HCT116 (cell line): ENCODE measurements at regions of chr11 and their contacts with region 1.

Region 1: DNA sequence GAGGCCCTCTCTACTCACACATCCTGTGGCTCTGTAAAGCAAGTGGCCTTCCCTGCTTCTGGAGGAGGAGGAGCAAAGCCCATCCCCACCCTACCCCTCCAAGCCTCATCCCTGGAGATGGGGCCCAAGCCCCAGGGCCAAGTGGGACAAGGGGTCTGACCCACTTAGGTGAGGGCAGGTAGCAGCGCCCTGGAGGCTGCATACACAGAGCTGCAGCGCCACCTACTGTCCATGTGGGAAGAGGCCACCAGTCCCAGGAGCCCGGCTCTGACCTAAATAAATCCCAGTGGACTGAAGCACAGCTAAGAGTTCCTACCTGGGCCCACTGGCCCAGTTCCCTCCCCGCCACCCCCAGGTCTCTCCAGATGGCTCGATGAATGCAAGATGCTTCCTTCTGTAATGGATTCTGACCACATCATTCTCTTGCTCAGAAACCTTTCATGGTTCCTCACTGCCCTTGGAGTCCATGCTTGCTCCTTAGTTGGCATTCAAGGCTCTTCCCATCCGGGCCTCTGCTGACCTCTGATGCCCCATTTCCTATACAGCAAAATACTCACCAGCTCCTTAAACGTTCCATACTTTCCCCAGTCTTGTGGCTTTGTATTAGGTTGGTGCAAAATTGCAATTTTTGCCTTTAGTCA is 62.1 kb downstream of the THAP12 start:
- DNase-seq: peak; percentile 55
- ATAC-seq: peak; percentile 99
- H3K4me3 ChIP-seq: no peak overlapping the region
- H3K27ac ChIP-seq: no peak overlapping the region
- H3K4me1 ChIP-seq: peaks cover 0 to 10% of the 10 kb centered on the region in 2 experiments; a peak in 1 of 4 replicates
- H3K27me3 ChIP-seq: no peaks in the 10 kb centered on the region
- CTCF ChIP-seq: peak; percentile 88 to 92 (median 91)
- POLR2A ChIP-seq: no peak
- RAD21 ChIP-seq: peak; percentile 98

Region 2: DNA sequence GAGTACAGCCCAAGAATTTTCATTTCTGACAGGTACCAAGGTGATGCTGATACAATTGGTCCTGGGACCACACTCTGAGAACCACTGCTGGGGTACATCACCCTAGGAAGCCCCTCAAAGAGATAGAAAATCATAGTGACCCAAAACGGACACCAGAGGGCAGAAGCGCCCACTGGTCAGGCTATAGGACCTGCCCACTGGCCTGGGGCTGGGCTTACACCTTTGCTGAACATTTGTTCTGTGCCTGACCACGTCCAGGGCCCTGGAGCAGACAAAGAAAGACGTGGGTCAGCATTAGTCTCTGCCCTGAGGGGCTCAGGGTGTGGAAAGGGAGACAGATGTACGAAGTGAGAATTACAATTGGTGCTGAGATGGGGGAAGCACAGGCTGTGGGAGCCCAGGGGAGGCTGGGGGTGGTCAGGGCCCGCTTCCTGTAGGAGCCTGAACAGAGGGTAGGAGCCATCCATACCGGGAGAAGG is 771.2 kb before region 1 on chr11:
- CTCF ChIA-PET with region 1: no interaction called
- POLR2A ChIA-PET with region 1: no interaction called
- RAD21 ChIA-PET with region 1: no interaction called
- intact Hi-C with region 1: loop called (anchors 5 kb)
- DNase-seq: no peak
- ATAC-seq: peak; percentile 95
- H3K4me3 ChIP-seq: no peak overlapping the region
- H3K27ac ChIP-seq: no peak overlapping the region
- H3K4me1 ChIP-seq: peaks cover 0 to 8% of the 10 kb centered on the region in 2 experiments; a peak in 2 of 4 replicates
- H3K27me3 ChIP-seq: no peaks in the 10 kb centered on the region
- CTCF ChIP-seq: peak; percentile 80 to 93 (median 86); a peak in 5 of 6 replicates
- POLR2A ChIP-seq: no peak
- RAD21 ChIP-seq: peak; percentile 90

Region 3: DNA sequence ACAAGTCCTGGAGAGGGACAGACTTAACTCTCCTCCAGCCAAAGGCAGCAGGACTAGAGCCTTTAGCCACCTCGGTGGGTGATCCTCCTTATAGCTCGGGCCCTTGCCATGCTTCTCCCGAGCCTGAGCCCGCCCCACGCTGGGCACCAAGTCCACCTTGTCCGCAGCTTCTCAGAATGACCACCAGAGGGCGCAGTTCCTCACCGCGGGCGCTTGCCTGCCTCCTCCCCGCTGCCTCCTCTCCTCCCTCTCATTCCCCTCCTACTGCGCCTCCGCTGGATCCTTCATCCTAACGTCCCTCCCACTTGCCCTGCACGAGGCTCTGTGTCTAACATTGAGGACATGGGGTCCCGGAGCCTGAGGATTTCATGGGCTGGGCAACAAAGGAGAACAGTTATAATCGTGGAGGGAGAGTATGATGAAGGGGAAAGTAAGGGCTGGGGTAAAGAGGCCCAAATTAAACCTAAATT is 612.6 kb before region 1 on chr11:
- CTCF ChIA-PET with region 1: interaction called, 5 read pairs
- POLR2A ChIA-PET with region 1: no interaction called
- RAD21 ChIA-PET with region 1: no interaction called
- intact Hi-C with region 1: loop called (anchors 1 kb)
- DNase-seq: peak; percentile 77
- ATAC-seq: peak; percentile 100
- H3K4me3 ChIP-seq: no peak overlapping the region
- H3K27ac ChIP-seq: no peak overlapping the region
- H3K4me1 ChIP-seq: peaks cover 2 to 11% of the 10 kb centered on the region in 2 experiments; a peak in 2 of 4 replicates
- H3K27me3 ChIP-seq: no peaks in the 10 kb centered on the region
- CTCF ChIP-seq: peak; percentile 80 to 93 (median 93)
- POLR2A ChIP-seq: no peak
- RAD21 ChIP-seq: peak; percentile 67

Region 4: DNA sequence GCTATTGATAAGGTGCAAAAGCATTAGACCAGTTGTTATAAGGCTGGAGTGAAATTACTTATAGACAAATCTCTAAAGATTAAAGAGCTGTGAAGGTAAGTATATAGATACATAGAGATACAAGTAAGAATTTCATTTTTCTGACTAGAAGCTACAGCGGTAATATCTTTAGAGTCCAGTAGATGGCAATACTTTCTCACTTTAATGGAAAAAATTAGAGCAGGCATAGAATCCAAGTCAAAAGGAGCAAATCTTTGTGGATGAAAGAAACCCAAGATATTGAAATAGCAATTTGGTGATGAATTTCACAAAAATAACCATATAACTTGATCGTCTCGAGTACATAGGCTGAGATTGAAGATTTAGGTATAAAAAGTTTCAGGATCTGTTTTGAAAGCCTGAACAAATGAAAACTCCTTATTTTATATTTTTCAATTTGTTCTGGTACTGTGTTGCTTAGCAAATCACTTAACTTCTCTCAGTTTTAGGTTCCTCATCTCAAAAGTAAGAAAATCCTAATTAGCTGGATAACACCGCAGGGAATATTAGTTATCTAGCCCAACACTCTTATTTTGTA is 421.9 kb before region 1 on chr11:
- CTCF ChIA-PET with region 1: interaction called, 8 read pairs
- POLR2A ChIA-PET with region 1: no interaction called
- RAD21 ChIA-PET with region 1: no interaction called
- intact Hi-C with region 1: loop called (anchors 1 kb)
- DNase-seq: peak; percentile 12
- ATAC-seq: peak; percentile 52; the same call in 1 of the 2 replicates
- H3K4me3 ChIP-seq: no peak overlapping the region
- H3K27ac ChIP-seq: no peak overlapping the region
- H3K4me1 ChIP-seq: no peaks in the 10 kb centered on the region
- H3K27me3 ChIP-seq: no peaks in the 10 kb centered on the region
- CTCF ChIP-seq: peak; percentile 32 to 71 (median 69); a peak in 5 of 6 replicates
- POLR2A ChIP-seq: no peak
- RAD21 ChIP-seq: peak; percentile 82

Region 5: DNA sequence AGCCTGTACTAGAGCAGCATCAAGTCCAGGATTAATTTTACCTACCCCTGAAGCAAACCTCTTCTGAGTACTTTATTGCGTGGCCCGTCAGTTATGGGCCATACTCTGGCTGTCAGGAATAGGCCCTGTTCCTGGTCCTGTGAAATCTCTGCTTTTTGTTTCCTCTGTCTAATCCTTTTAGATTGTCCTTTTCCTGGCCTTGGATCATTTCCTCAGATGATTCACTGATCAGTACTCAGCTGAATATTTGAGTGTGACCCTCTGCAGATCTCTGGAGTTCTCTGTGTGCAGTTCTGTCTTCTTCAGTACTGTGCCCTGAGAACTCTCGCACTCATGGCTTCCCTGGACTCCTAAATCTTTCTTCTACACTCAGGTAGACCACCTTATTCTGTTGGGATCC is 380.3 kb before region 1 on chr11:
- CTCF ChIA-PET with region 1: no interaction called
- POLR2A ChIA-PET with region 1: no interaction called
- RAD21 ChIA-PET with region 1: no interaction called
- intact Hi-C with region 1: no loop called
- DNase-seq: no peak
- ATAC-seq: no peak
- H3K4me3 ChIP-seq: no peak overlapping the region
- H3K27ac ChIP-seq: no peak overlapping the region
- H3K4me1 ChIP-seq: no peaks in the 10 kb centered on the region
- H3K27me3 ChIP-seq: no peaks in the 10 kb centered on the region
- CTCF ChIP-seq: no peak
- POLR2A ChIP-seq: no peak
- RAD21 ChIP-seq: no peak

Region 6: DNA sequence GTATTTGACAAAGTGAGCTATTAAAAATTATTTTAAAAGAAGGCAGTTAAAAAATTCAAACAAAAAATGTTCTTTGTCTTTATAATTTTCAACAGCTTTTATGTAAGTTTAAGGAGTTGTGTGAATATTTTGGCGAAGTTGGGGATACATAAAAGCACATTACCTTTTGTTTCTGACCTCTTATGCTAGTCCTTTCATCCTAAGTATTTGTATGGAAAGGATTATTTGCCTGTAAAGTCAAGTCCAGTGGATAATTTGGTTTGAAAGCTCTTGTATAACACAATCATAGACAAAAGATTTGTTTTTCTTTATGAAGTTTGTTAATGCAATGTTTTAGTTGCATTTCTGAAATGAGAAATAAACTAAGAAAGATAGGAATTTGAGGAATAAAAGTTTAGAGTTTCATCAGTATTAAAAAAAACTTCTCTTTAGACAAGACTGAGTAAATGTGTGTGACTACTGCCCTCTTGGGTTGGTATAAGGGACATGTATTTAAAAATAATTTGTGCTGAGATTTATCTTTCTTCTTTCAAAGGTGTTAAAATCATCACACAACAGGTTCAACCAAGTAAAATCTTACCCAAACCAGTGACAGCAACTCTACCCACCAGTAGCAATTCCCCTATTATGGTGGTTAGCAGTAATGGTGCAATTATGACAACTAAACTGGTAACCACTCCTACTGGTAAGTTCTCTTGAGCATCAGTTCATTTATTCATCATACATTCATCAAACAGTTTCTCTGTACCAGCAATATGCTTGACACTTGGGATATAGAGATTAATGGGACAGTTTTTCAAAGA is 194.2 kb after region 1 on chr11:
- CTCF ChIA-PET with region 1: interaction called, 3 read pairs
- POLR2A ChIA-PET with region 1: no interaction called
- RAD21 ChIA-PET with region 1: no interaction called
- intact Hi-C with region 1: loop called (anchors 2 kb)
- DNase-seq: peak; percentile 16
- ATAC-seq: peak; percentile 54; the same call in 1 of the 2 replicates
- H3K4me3 ChIP-seq: no peak overlapping the region
- H3K27ac ChIP-seq: no peak overlapping the region
- H3K4me1 ChIP-seq: no peaks in the 10 kb centered on the region
- H3K27me3 ChIP-seq: no peaks in the 10 kb centered on the region
- CTCF ChIP-seq: peak; percentile 29 to 63 (median 31); a peak in 5 of 6 replicates
- POLR2A ChIP-seq: no peak
- RAD21 ChIP-seq: peak; percentile 63